Right ventricle myocardium inferior (tissue), 1 donor: ENCODE measurements at regions of chr13 and their contacts with region 1.

Region 1: DNA sequence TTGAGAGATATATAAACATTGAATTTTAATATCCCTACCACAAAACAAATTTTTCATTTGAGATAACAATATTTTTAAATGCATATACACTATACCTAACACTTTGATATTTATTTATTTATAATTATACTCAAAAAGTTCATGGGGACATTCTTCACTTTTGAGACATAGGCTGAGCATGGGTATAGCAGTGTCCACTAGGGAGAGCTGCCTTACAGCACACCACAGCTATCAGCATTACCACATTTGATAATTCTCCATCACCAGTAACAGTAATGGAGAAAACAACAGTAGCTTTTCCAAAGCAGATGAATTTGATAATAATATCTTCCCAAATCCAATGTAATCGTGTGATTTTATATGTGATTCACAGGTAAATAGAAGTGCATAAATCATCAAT is 626.1 kb downstream of the DACH1 start:
- DNase-seq: no peak
- ATAC-seq: no peak

Region 2: DNA sequence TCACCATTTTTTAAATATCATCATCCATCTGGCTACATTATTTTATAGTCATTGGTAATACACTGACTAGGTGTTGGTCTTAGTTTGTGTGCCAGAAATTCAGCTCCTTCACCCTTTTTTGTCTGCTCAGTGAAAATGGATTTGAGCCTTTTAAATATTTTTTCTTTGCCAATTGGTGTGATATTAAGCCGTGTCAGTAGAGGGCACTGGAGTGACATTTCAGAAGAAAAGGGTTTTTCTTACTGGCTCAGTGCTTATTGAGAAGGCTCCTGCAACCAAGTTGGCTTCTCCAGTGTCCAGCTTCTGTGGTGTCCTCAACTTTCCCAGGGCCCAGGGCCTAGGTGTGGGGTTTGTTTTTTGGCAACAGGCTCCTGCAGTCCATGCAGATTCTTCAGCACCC is 79.5 kb after region 1 on chr13:
- intact Hi-C with region 1: no loop called
- DNase-seq: no peak
- ATAC-seq: no peak

Region 3: GRCh38 chr13:71477735-71478134 is 236.8 kb after region 1 on chr13:
- intact Hi-C with region 1: loop called (anchors 10 kb)
- DNase-seq: no peak
- ATAC-seq: no peak

Region 4: GRCh38 chr13:71879129-71879535 is 638.2 kb after region 1 on chr13:
- intact Hi-C with region 1: loop called (anchors 5 kb)
- DNase-seq: no peak
- ATAC-seq: peak; percentile 63